CD4-positive, alpha-beta T cell (primary cell): ENCODE measurements at regions of chr3 and their contacts with region 1.

Region 1: DNA sequence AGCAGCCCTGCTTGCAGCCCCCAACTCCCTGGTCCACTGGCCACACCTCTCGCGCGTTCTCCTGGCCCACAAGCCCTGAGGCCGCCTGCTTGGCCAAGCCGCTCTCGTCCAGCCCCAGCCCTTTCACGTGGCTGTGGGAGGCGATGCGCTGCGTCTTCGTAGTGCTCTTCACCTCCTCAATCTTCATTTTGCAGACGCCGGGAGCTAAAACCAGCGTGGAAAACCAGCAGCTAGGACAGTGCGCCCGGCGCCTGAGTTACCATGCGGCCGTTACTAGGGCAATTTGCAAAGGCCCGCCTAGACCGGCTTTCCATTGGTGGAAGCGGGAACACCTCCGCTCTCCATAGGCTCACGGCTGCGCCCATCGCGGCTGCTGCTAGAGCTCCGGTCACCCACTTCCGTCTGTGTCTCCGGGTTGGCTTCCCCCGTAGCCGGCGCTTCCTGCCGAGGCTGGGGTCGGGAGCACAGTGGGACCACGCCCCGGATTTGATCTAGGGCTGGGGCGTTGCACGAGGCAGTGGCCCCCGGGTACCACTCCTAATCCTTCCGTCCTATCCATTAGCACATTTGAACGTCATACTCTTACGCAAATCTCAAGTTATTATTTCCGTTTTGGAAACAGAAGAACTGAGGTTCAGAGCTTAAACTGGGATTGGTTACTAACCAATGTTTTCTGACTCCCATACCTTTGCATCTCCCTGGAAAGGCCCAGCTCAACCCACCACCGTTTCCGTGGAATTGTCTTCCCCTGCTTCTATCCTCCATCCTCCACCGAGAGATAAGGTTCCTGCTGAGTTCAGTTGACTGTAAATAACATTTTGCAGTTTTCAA is at the start of gene RUVBL1:
- DNase-seq: peak; percentile 91 to 99 (median 95)
- ATAC-seq: peak; percentile 93
- H3K4me3 ChIP-seq: peak within 1 kb of the TSS; percentile 98
- H3K4me3 Mint-ChIP-seq: peak within 1 kb of the TSS; percentile 95
- H3K27ac ChIP-seq: peak within 1 kb of the TSS; percentile 67 to 84
- H3K27ac Mint-ChIP-seq: peak within 1 kb of the TSS; percentile 93
- H3K4me1 ChIP-seq: peaks cover 21% of the 10 kb centered on the region
- H3K4me1 Mint-ChIP-seq: peaks cover 28% of the 10 kb centered on the region
- H3K27me3 ChIP-seq: no peaks in the 10 kb centered on the region
- H3K27me3 Mint-ChIP-seq: no peaks in the 10 kb centered on the region
- CTCF ChIP-seq: no peak
- total RNA-seq, gene RUVBL1: 5.6 to 7.7 TPM

Region 2: GRCh38 chr3:127590593-127591477 is 532.9 kb before region 1 on chr3 and contains the start of gene TPRA1:
- CTCF ChIA-PET with region 1: no interaction called
- POLR2A ChIA-PET with region 1: no interaction called
- intact Hi-C with region 1: loop called in 1 of 2 experiments (anchors 10 kb)
- DNase-seq: peak; percentile 51 to 93 (median 74)
- ATAC-seq: peak; percentile 89
- H3K4me3 ChIP-seq: peak within 1 kb of the TSS; percentile 71
- H3K4me3 Mint-ChIP-seq: peak within 1 kb of the TSS; percentile 99
- H3K27ac ChIP-seq: peak within 1 kb of the TSS; percentile 54 to 82
- H3K27ac Mint-ChIP-seq: peak within 1 kb of the TSS; percentile 93
- H3K4me1 ChIP-seq: peaks cover 36% of the 10 kb centered on the region
- H3K4me1 Mint-ChIP-seq: peaks cover 43% of the 10 kb centered on the region
- H3K27me3 ChIP-seq: no peaks in the 10 kb centered on the region
- H3K27me3 Mint-ChIP-seq: no peaks in the 10 kb centered on the region
- CTCF ChIP-seq: no peak
- total RNA-seq, gene TPRA1: 7.5 to 7.8 TPM

Region 3: GRCh38 chr3:128081846-128082245 is 41.9 kb before region 1 on chr3:
- CTCF ChIA-PET with region 1: no interaction called
- POLR2A ChIA-PET with region 1: no interaction called
- intact Hi-C with region 1: no loop called
- DNase-seq: no peak
- ATAC-seq: no peak
- H3K4me3 ChIP-seq: no peak overlapping the region
- H3K4me3 Mint-ChIP-seq: no peak overlapping the region
- H3K27ac ChIP-seq: no peak overlapping the region
- H3K27ac Mint-ChIP-seq: no peak overlapping the region
- H3K4me1 ChIP-seq: peaks cover 6% of the 10 kb centered on the region
- H3K4me1 Mint-ChIP-seq: no peaks in the 10 kb centered on the region
- H3K27me3 ChIP-seq: peaks cover 0 to 5% of the 10 kb centered on the region in 2 experiments
- H3K27me3 Mint-ChIP-seq: no peaks in the 10 kb centered on the region
- CTCF ChIP-seq: no peak

Region 4: GRCh38 chr3:128112357-128112968 is 11.3 kb before region 1 on chr3:
- CTCF ChIA-PET with region 1: interaction called, 5 read pairs
- POLR2A ChIA-PET with region 1: interaction called, 25 read pairs
- intact Hi-C with region 1: no loop called
- DNase-seq: peak in 12 of 14 experiments; percentile 11 to 83 (median 32)
- ATAC-seq: peak; percentile 94
- H3K4me3 ChIP-seq: no peak overlapping the region
- H3K4me3 Mint-ChIP-seq: peak overlapping the region; percentile 43
- H3K27ac ChIP-seq: peak overlapping the region in 1 of 2 donors; percentile 74
- H3K27ac Mint-ChIP-seq: peak overlapping the region; percentile 90
- H3K4me1 ChIP-seq: peaks cover 23% of the 10 kb centered on the region
- H3K4me1 Mint-ChIP-seq: peaks cover 48% of the 10 kb centered on the region
- H3K27me3 ChIP-seq: no peaks in the 10 kb centered on the region
- H3K27me3 Mint-ChIP-seq: no peaks in the 10 kb centered on the region
- CTCF ChIP-seq: no peak

Region 5: DNA sequence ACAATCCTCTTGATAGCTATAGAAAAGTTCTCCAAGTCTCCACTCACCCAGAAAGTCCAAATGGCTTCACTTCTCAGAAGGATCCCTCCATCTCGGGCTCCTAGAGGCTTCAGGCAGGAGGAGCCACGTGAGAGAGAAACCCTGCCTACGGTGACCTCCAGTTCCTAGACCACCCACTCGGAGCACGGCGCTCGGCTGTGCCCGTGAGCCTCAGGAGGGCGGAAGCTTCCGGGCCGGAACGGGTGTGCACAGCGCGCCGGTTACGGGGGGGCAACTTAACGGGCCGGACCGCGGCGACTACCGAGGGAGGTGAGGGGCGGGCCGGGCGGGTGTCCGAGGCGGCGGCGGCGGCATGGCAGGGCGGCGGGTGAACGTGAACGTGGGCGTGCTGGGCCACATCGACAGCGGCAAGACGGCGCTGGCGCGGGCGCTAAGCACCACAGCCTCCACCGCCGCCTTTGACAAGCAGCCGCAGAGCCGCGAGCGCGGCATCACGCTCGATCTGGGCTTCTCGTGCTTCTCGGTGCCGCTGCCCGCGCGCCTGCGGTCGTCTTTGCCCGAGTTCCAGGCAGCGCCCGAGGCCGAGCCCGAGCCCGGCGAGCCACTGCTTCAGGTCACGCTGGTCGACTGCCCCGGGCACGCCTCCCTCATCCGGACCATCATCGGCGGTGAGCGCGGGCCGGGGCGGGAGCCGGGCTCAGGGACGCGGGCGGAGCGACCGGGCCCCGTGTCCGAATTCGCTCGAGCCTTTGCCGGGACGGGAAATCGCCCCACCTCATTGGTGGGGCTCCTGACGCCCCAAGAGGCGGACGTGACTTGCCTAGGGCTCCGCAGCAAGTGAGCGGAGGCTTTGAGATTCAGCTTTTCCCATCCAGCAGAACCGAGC is 29.6 kb after region 1 on chr3 and contains the start of gene EEFSEC:
- CTCF ChIA-PET with region 1: interaction called, 8 read pairs
- POLR2A ChIA-PET with region 1: interaction called, 77 read pairs
- intact Hi-C with region 1: loop called (anchors 1 kb)
- DNase-seq: peak; percentile 72 to 90 (median 82)
- ATAC-seq: peak; percentile 87
- H3K4me3 ChIP-seq: peak within 1 kb of the TSS; percentile 58
- H3K4me3 Mint-ChIP-seq: peak within 1 kb of the TSS; percentile 87
- H3K27ac ChIP-seq: peak within 1 kb of the TSS; percentile 56 to 80
- H3K27ac Mint-ChIP-seq: peak within 1 kb of the TSS; percentile 84
- H3K4me1 ChIP-seq: peaks cover 22% of the 10 kb centered on the region
- H3K4me1 Mint-ChIP-seq: peaks cover 40% of the 10 kb centered on the region
- H3K27me3 ChIP-seq: no peaks in the 10 kb centered on the region
- H3K27me3 Mint-ChIP-seq: no peaks in the 10 kb centered on the region
- CTCF ChIP-seq: no peak
- total RNA-seq, gene EEFSEC: 13.1 to 13.9 TPM